CD4-positive, alpha-beta T cell (primary cell): ENCODE measurements at regions of chr9 and their contacts with region 1.

Region 1: DNA sequence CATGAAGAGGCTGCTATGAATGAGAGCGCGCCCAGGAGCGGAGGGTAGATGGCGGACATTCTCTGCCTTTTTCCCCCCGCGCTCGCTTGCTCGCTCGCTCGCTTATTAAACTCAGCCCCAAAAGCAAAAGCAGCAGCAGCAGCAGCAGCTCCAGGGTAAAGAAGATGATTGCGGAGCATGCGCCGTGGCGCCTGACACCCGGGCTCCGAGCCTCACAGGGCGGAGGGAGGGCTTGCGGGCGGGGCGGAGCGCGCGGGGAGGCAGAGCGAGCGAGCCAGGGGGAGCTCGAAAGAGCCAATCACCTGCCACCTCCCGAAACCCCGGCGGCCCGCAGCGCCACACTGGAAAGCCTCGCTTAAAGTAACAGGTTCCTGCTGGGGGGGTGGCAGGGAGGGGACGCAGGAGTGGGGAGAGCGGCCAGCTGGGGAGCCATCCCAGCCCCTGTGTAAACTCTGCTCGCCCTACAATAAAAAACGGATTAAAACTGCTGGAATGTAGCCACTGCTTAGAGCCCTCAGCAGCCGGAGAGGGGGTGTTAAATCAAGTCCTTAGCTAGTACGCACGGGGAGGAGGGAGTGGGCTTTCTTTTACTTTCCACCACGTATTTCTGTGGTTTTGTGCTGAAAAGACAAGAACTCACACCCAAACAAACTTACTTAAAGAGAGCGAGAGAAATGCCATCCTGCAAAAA is at the start of gene MLLT3:
- DNase-seq: peak; percentile 95 to 98 (median 97)
- ATAC-seq: peak; percentile 73
- H3K4me3 ChIP-seq: peak within 1 kb of the TSS; percentile 97
- H3K4me3 Mint-ChIP-seq: peak within 1 kb of the TSS; percentile 93
- H3K27ac ChIP-seq: peak within 1 kb of the TSS; percentile 79 to 92
- H3K27ac Mint-ChIP-seq: peak within 1 kb of the TSS; percentile 93
- H3K4me1 ChIP-seq: peaks cover 24% of the 10 kb centered on the region
- H3K4me1 Mint-ChIP-seq: peaks cover 46% of the 10 kb centered on the region
- H3K27me3 ChIP-seq: no peaks in the 10 kb centered on the region
- H3K27me3 Mint-ChIP-seq: no peaks in the 10 kb centered on the region
- CTCF ChIP-seq: no peak
- total RNA-seq, gene MLLT3: 59.2 to 60.6 TPM

Region 2: GRCh38 chr9:19925817-19926503 is 696.5 kb before region 1 on chr9:
- CTCF ChIA-PET with region 1: no interaction called
- POLR2A ChIA-PET with region 1: no interaction called
- intact Hi-C with region 1: loop called in 1 of 2 experiments (anchors 5 kb)
- DNase-seq: peak; percentile 62 to 89 (median 72)
- ATAC-seq: peak; percentile 100
- H3K4me3 ChIP-seq: peak overlapping the region; percentile 21
- H3K4me3 Mint-ChIP-seq: peak overlapping the region; percentile 47
- H3K27ac ChIP-seq: no peak overlapping the region
- H3K27ac Mint-ChIP-seq: no peak overlapping the region
- H3K4me1 ChIP-seq: peaks cover 7% of the 10 kb centered on the region
- H3K4me1 Mint-ChIP-seq: peaks cover 5% of the 10 kb centered on the region
- H3K27me3 ChIP-seq: no peaks in the 10 kb centered on the region
- H3K27me3 Mint-ChIP-seq: peaks cover 15% of the 10 kb centered on the region
- CTCF ChIP-seq: peak; percentile 94

Region 3: GRCh38 chr9:20394969-20395368 is 227.5 kb before region 1 on chr9:
- CTCF ChIA-PET with region 1: interaction called, 4 read pairs
- POLR2A ChIA-PET with region 1: interaction called, 12 read pairs
- intact Hi-C with region 1: no loop called
- DNase-seq: no peak
- ATAC-seq: no peak
- H3K4me3 ChIP-seq: no peak overlapping the region
- H3K4me3 Mint-ChIP-seq: no peak overlapping the region
- H3K27ac ChIP-seq: no peak overlapping the region
- H3K27ac Mint-ChIP-seq: peak overlapping the region; percentile 25
- H3K4me1 ChIP-seq: peaks cover 12% of the 10 kb centered on the region
- H3K4me1 Mint-ChIP-seq: peaks cover 63% of the 10 kb centered on the region
- H3K27me3 ChIP-seq: no peaks in the 10 kb centered on the region
- H3K27me3 Mint-ChIP-seq: no peaks in the 10 kb centered on the region
- CTCF ChIP-seq: no peak

Region 4: GRCh38 chr9:20552874-20553575 is 69.5 kb before region 1 on chr9:
- CTCF ChIA-PET with region 1: interaction called, 4 read pairs
- POLR2A ChIA-PET with region 1: interaction called, 7 read pairs
- intact Hi-C with region 1: loop called (anchors 1 to 5 kb)
- DNase-seq: peak in 2 of 14 experiments; percentile 16
- ATAC-seq: peak; percentile 21
- H3K4me3 ChIP-seq: no peak overlapping the region
- H3K4me3 Mint-ChIP-seq: peak overlapping the region; percentile 32
- H3K27ac ChIP-seq: no peak overlapping the region
- H3K27ac Mint-ChIP-seq: peak overlapping the region; percentile 55
- H3K4me1 ChIP-seq: peaks cover 16% of the 10 kb centered on the region
- H3K4me1 Mint-ChIP-seq: peaks cover 76% of the 10 kb centered on the region
- H3K27me3 ChIP-seq: no peaks in the 10 kb centered on the region
- H3K27me3 Mint-ChIP-seq: no peaks in the 10 kb centered on the region
- CTCF ChIP-seq: peak; percentile 9

Region 5: DNA sequence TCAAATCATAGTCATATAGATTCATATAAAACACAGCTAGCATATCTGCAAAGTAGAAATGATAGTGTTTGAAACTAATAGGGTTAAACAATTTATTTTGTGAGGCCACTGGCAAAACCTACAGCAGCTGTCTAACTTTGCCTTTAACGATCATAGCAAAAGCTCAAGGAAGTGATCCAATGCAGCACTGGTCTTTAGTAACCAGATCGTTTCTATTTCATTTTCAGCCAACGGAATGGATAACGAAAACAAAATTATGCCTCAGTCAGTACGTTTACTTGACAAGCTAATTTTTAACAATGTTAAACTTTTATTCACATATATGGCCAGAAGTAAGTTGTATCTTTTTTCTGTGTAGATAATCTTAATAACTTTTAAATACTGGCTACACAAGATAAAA is 17.9 kb before region 1 on chr9:
- CTCF ChIA-PET with region 1: interaction called, 4 read pairs
- POLR2A ChIA-PET with region 1: interaction called, 21 read pairs
- intact Hi-C with region 1: loop called in 1 of 2 experiments (anchors 2 kb)
- DNase-seq: peak in 3 of 14 experiments; percentile 28 to 34 (median 30)
- ATAC-seq: peak; percentile 59
- H3K4me3 ChIP-seq: no peak overlapping the region
- H3K4me3 Mint-ChIP-seq: peak overlapping the region; percentile 46
- H3K27ac ChIP-seq: no peak overlapping the region
- H3K27ac Mint-ChIP-seq: peak overlapping the region; percentile 15
- H3K4me1 ChIP-seq: no peaks in the 10 kb centered on the region
- H3K4me1 Mint-ChIP-seq: peaks cover 92% of the 10 kb centered on the region
- H3K27me3 ChIP-seq: no peaks in the 10 kb centered on the region
- H3K27me3 Mint-ChIP-seq: no peaks in the 10 kb centered on the region
- CTCF ChIP-seq: no peak

Region 6: DNA sequence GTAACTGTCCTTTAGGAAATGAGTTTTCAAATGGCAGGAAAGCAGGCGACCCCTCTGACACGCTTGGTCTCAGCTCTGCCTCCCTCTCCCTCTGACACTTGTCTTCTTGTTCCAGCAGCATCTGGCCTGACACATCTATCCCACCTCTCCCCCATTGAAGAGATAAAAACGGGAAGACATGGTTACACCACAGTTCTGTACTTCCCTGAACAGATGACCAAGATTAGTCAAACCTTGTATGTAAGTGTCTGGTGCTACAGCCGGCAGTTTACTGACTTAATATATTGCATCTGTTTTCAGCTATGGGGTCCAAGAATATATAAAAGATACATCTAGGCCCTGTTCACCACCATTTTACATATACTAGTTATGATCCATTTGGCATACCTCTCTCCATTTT is 29.5 kb after region 1 on chr9:
- CTCF ChIA-PET with region 1: no interaction called
- POLR2A ChIA-PET with region 1: no interaction called
- intact Hi-C with region 1: no loop called
- DNase-seq: no peak
- ATAC-seq: no peak
- H3K4me3 ChIP-seq: no peak overlapping the region
- H3K4me3 Mint-ChIP-seq: no peak overlapping the region
- H3K27ac ChIP-seq: no peak overlapping the region
- H3K27ac Mint-ChIP-seq: no peak overlapping the region
- H3K4me1 ChIP-seq: no peaks in the 10 kb centered on the region
- H3K4me1 Mint-ChIP-seq: peaks cover 6% of the 10 kb centered on the region
- H3K27me3 ChIP-seq: no peaks in the 10 kb centered on the region
- H3K27me3 Mint-ChIP-seq: no peaks in the 10 kb centered on the region
- CTCF ChIP-seq: no peak

Region 7: DNA sequence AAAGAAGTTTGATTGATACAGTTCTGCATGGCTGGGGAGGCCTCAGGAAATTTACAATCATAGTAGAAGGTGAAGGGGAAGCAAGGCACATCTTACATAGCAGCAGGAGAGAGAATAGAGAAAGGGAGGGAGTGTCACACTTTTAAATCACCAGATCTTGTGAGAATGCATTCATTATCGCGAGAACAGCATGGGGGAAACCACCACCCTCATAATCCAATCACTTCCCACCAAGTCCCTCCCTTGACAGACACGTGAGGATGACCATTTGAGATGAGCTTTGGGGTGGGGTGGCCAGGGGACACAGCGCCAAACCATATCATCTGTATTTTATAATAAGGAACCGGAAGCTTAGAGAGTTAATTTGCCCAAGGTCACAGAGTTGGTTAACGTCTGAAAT is 47.9 kb after region 1 on chr9:
- CTCF ChIA-PET with region 1: no interaction called
- POLR2A ChIA-PET with region 1: no interaction called
- intact Hi-C with region 1: no loop called
- DNase-seq: no peak
- ATAC-seq: no peak
- H3K4me3 ChIP-seq: no peak overlapping the region
- H3K4me3 Mint-ChIP-seq: no peak overlapping the region
- H3K27ac ChIP-seq: no peak overlapping the region
- H3K27ac Mint-ChIP-seq: no peak overlapping the region
- H3K4me1 ChIP-seq: no peaks in the 10 kb centered on the region
- H3K4me1 Mint-ChIP-seq: no peaks in the 10 kb centered on the region
- H3K27me3 ChIP-seq: no peaks in the 10 kb centered on the region
- H3K27me3 Mint-ChIP-seq: no peaks in the 10 kb centered on the region
- CTCF ChIP-seq: no peak

Region 8: GRCh38 chr9:20684035-20684872 is 61.8 kb after region 1 on chr9 and contains the start of gene FOCAD:
- CTCF ChIA-PET with region 1: interaction called, 8 read pairs
- POLR2A ChIA-PET with region 1: interaction called, 109 read pairs
- intact Hi-C with region 1: loop called (anchors 1 to 2 kb)
- DNase-seq: peak; percentile 88 to 98 (median 94)
- ATAC-seq: peak; percentile 97
- H3K4me3 ChIP-seq: peak within 1 kb of the TSS; percentile 93
- H3K4me3 Mint-ChIP-seq: peak within 1 kb of the TSS; percentile 90
- H3K27ac ChIP-seq: peak within 1 kb of the TSS; percentile 50 to 71
- H3K27ac Mint-ChIP-seq: peak within 1 kb of the TSS; percentile 75
- H3K4me1 ChIP-seq: peaks cover 18% of the 10 kb centered on the region
- H3K4me1 Mint-ChIP-seq: peaks cover 19% of the 10 kb centered on the region
- H3K27me3 ChIP-seq: no peaks in the 10 kb centered on the region
- H3K27me3 Mint-ChIP-seq: no peaks in the 10 kb centered on the region
- CTCF ChIP-seq: no peak
- total RNA-seq, gene FOCAD: 12.4 to 14.1 TPM

Region 9: GRCh38 chr9:21031091-21031807 is 408.8 kb after region 1 on chr9 and contains the start of gene HACD4:
- CTCF ChIA-PET with region 1: no interaction called
- POLR2A ChIA-PET with region 1: interaction called, 18 read pairs
- intact Hi-C with region 1: loop called in 1 of 2 experiments (anchors 10 kb)
- DNase-seq: peak; percentile 40 to 86 (median 60)
- ATAC-seq: peak; percentile 86
- H3K4me3 ChIP-seq: peak within 1 kb of the TSS; percentile 63
- H3K4me3 Mint-ChIP-seq: peak within 1 kb of the TSS; percentile 83
- H3K27ac ChIP-seq: peak within 1 kb of the TSS; percentile 62 to 66
- H3K27ac Mint-ChIP-seq: peak within 1 kb of the TSS; percentile 35
- H3K4me1 ChIP-seq: peaks cover 28% of the 10 kb centered on the region
- H3K4me1 Mint-ChIP-seq: peaks cover 35% of the 10 kb centered on the region
- H3K27me3 ChIP-seq: no peaks in the 10 kb centered on the region
- H3K27me3 Mint-ChIP-seq: no peaks in the 10 kb centered on the region
- CTCF ChIP-seq: no peak
- total RNA-seq, gene HACD4: 5.9 to 6.5 TPM